GM18951 (cell line): ENCODE measurements at regions of chr14 and their contacts with region 1.

Region 1: GRCh38 chr14:89040460-89041259 is 216.2 kb downstream of the TTC8 start:
- POLR2A ChIP-seq: no peak

Region 2: GRCh38 chr14:89416002-89416995 is 375.6 kb after region 1 on chr14:
- in situ Hi-C with region 1: loop called (anchors 25 kb)
- POLR2A ChIP-seq: no peak

Region 3: GRCh38 chr14:89767861-89768268 is 727.2 kb after region 1 on chr14:
- in situ Hi-C with region 1: loop called (anchors 25 kb)
- POLR2A ChIP-seq: no peak

Region 4: GRCh38 chr14:89915114-89915878 is 874.6 kb after region 1 on chr14:
- in situ Hi-C with region 1: loop called (anchors 5 kb)
- POLR2A ChIP-seq: no peak